Psoas muscle (tissue), 8 donors: ENCODE measurements at regions of chr9 and their contacts with region 1.

Region 1: GRCh38 chr9:5628530-5629311 is at the start of gene RIC1:
- DNase-seq: peak; percentile 92 to 96
- ATAC-seq: peak; percentile 81 to 92 (median 90)
- H3K4me3 ChIP-seq: peak within 1 kb of the TSS; percentile 95
- H3K27ac ChIP-seq: peak within 1 kb of the TSS; percentile 96
- H3K4me1 ChIP-seq: peaks cover 47% of the 10 kb centered on the region
- H3K27me3 ChIP-seq: no peaks in the 10 kb centered on the region
- CTCF ChIP-seq: no peak
- total RNA-seq, gene RIC1: 10.9 to 28.6 (median 13.8) TPM

Region 2: GRCh38 chr9:4662108-4662988 is 966.4 kb before region 1 on chr9 and contains the start of gene PLPP6:
- intact Hi-C with region 1: loop called in 1 of 2 experiments (anchors 10 kb)
- DNase-seq: peak; percentile 87 to 94
- ATAC-seq: peak; percentile 96 to 98 (median 97)
- H3K4me3 ChIP-seq: peak within 1 kb of the TSS; percentile 69
- H3K27ac ChIP-seq: peak within 1 kb of the TSS; percentile 60
- H3K4me1 ChIP-seq: peaks cover 24% of the 10 kb centered on the region
- H3K27me3 ChIP-seq: no peaks in the 10 kb centered on the region
- CTCF ChIP-seq: peak; percentile 50
- total RNA-seq, gene PLPP6: 1.1 to 2.3 (median 1.9) TPM

Region 3: DNA sequence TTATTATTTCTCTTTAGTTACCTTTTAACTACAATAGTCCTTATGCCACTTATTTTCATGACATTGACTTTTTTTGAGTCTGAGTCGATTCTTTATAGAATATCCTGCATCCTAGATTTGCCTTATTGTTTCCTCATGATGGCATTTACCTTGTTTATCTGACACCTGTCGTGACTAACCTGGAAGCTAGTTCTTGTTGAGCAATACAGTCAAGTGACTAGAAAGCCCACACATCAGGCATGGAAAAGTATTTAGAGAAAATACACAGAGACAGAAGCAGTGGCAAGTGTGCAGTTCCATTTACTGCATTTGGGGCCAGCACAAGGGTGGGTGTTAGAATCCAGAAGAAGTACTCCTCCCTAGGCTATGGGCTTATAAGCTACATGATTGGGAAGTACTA is 106.4 kb after region 1 on chr9:
- intact Hi-C with region 1: loop called in 1 of 2 experiments (anchors 10 kb)
- DNase-seq: no peak
- ATAC-seq: no peak
- H3K4me3 ChIP-seq: no peak overlapping the region
- H3K27ac ChIP-seq: no peak overlapping the region
- H3K4me1 ChIP-seq: no peaks in the 10 kb centered on the region
- H3K27me3 ChIP-seq: no peaks in the 10 kb centered on the region
- CTCF ChIP-seq: no peak

Region 4: GRCh38 chr9:5825223-5825622 is 196.5 kb after region 1 on chr9:
- intact Hi-C with region 1: loop called in 1 of 2 experiments (anchors 10 kb)
- DNase-seq: no peak
- ATAC-seq: no peak
- H3K4me3 ChIP-seq: no peak overlapping the region
- H3K27ac ChIP-seq: no peak overlapping the region
- H3K4me1 ChIP-seq: peaks cover 5% of the 10 kb centered on the region
- H3K27me3 ChIP-seq: no peaks in the 10 kb centered on the region
- CTCF ChIP-seq: no peak

Region 5: GRCh38 chr9:6015278-6016157 is 386.8 kb after region 1 on chr9 and contains the start of gene RANBP6:
- intact Hi-C with region 1: loop called in 1 of 2 experiments (anchors 10 kb)
- DNase-seq: peak; percentile 92 to 96
- ATAC-seq: peak; percentile 99 to 100 (median 100)
- H3K4me3 ChIP-seq: peak within 1 kb of the TSS; percentile 93
- H3K27ac ChIP-seq: peak within 1 kb of the TSS; percentile 91
- H3K4me1 ChIP-seq: peaks cover 37% of the 10 kb centered on the region
- H3K27me3 ChIP-seq: no peaks in the 10 kb centered on the region
- CTCF ChIP-seq: no peak
- total RNA-seq, gene RANBP6: 16.3 to 24.2 (median 20.0) TPM